ENCODE measurements at regions of chr3 and their contacts with region 1.

Region 1: GRCh38 chr3:170751083-170751898 is 118.7 kb downstream of the RPL22L1 start:
- DNase-seq: peak; percentile 95
- H3K4me3 ChIP-seq: no peak overlapping the region
- H3K27ac ChIP-seq: peak overlapping the region; percentile 95
- H3K4me1 ChIP-seq: peaks cover 77% of the 10 kb centered on the region
- H3K27me3 ChIP-seq: no peaks in the 10 kb centered on the region
- CTCF ChIP-seq: no peak
- POLR2A ChIP-seq: no peak

Region 2: DNA sequence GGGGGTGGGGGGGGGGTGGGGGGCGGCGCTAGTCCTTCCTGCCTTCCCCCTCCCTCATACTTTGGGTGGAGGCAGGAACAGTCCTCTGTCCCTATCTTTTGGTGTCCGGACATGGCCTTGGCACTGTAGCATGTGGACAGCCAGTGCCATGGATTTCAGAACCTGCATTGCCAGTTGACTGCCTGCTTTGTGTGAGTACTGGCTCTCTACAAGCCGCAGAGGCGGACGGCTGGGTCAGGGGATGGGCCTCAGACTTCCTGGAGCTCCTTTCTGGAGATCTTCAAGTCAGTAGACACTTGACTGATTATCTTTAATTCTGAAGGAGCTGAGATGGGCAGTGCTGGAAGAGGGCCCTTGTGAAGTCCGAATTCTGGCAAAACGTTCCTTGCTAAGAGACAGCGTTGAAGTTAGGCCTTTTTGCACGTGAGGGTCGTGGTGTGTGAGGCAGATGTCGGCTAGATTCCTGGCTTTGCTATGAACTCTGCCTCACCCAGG is 330.1 kb before region 1 on chr3:
- CTCF ChIA-PET with region 1: interaction called, 3 read pairs
- POLR2A ChIA-PET with region 1: no interaction called
- dilution Hi-C with region 1: no loop called
- intact Hi-C with region 1: loop called (anchors 1 kb)
- DNase-seq: peak; percentile 21
- H3K4me3 ChIP-seq: peak overlapping the region in 2 of 3 experiments; percentile 65 to 86
- H3K27ac ChIP-seq: peak overlapping the region; percentile 46
- H3K4me1 ChIP-seq: peaks cover 53% of the 10 kb centered on the region
- H3K27me3 ChIP-seq: no peaks in the 10 kb centered on the region
- CTCF ChIP-seq: no peak
- POLR2A ChIP-seq: peak; percentile 52

Region 3: GRCh38 chr3:170429050-170429449 is 322.2 kb before region 1 on chr3:
- CTCF ChIA-PET with region 1: interaction called, 4 read pairs
- POLR2A ChIA-PET with region 1: interaction called, 10 read pairs
- dilution Hi-C with region 1: no loop called
- intact Hi-C with region 1: no loop called
- DNase-seq: peak; percentile 16
- H3K4me3 ChIP-seq: no peak overlapping the region
- H3K27ac ChIP-seq: no peak overlapping the region
- H3K4me1 ChIP-seq: peaks cover 31% of the 10 kb centered on the region
- H3K27me3 ChIP-seq: no peaks in the 10 kb centered on the region
- CTCF ChIP-seq: no peak
- POLR2A ChIP-seq: no peak

Region 4: GRCh38 chr3:170689893-170690660 is 61.2 kb before region 1 on chr3:
- CTCF ChIA-PET with region 1: interaction called, 3 read pairs
- POLR2A ChIA-PET with region 1: no interaction called
- dilution Hi-C with region 1: no loop called
- intact Hi-C with region 1: loop called (anchors 2 kb)
- DNase-seq: no peak
- H3K4me3 ChIP-seq: no peak overlapping the region
- H3K27ac ChIP-seq: no peak overlapping the region
- H3K4me1 ChIP-seq: peaks cover 11% of the 10 kb centered on the region
- H3K27me3 ChIP-seq: no peaks in the 10 kb centered on the region
- CTCF ChIP-seq: peak; percentile 59 to 61
- POLR2A ChIP-seq: no peak